ENCODE measurements at regions of chr14 and their contacts with region 1.

Region 1: DNA sequence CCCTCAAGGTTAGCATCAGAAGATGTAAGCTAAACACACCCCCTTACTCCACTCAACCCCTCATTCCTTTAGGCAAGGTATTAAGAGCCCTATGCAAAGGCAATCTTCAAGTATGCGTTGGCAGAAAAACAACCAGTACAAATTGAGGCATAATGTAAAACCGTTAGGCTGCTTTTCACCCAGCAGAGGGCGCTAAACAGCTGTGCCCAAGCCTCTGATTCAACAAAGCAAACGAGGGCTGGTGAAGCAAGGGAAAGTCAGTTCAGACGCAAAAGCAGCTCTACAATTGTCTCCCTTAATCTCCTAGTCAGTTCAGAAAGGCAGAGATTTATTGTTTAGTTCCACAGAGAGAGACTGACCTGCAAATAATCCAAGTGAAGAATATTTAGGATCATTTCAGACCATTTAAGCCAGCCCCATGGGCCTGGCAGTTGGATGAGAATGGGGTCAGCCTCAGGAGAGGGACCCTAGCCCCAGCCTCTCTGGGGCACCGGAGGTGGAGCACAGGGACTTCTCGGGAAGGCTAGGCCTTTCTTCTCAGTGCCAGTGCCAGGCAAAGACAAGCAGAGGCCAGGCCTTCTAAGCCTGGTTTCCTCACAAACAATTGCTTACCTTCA is 23.5 kb downstream of the DCAF5 start:
- DNase-seq: peak; percentile 82
- ATAC-seq: peak; percentile 88
- H3K4me3 Mint-ChIP-seq: no peak overlapping the region
- H3K27ac Mint-ChIP-seq: peak overlapping the region; percentile 62
- H3K4me1 Mint-ChIP-seq: peaks cover 30% of the 10 kb centered on the region
- H3K27me3 Mint-ChIP-seq: no peaks in the 10 kb centered on the region

Region 2: DNA sequence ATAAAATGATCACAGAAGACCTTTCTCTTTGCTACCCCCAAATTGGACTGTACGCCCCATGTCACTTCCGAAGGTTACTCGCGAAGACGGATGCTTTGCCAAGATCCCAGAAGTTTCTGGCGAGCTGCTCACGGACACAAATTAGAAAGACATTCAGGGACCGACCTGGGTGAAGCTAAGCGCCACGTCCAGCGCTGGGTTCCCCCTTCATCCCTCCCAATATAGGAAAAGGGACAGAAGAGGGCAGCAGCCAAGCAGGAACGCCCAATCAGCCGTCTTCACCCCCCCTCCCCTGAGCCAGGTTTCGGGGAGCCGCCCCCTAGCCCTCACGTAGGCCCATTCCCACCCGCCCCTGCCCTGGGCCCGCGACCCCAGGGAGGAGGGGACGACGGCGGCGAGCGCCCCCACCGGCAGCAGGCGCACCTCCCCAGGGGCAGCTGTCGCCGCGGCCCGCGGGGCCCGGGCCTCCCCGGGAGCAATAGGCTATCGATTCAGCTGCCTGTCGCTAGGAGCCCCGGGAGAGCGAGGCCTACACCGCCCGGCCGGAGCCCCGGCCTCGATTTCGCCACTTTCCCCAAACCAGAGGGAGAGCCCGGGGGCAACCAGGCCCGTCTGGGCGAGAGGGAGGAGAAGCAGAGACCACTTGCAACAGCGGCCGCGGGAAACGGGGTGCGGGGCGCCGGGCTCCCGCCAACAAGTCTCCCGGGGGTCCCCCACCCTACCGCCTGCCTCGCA is 22.1 kb after region 1 on chr14:
- CTCF ChIA-PET with region 1: interaction called, 19 read pairs
- DNase-seq: peak; percentile 84
- ATAC-seq: peak; percentile 65
- H3K4me3 Mint-ChIP-seq: peak overlapping the region; percentile 83
- H3K27ac Mint-ChIP-seq: peak overlapping the region; percentile 93
- H3K4me1 Mint-ChIP-seq: peaks cover 37% of the 10 kb centered on the region
- H3K27me3 Mint-ChIP-seq: peaks cover 16% of the 10 kb centered on the region

Measured in activated CD8-positive, alpha-beta memory T cell treated with anti-CD3 and anti-CD28 coated beads, Interleukin-2, amount 10 ng/mL, durations not matched to agents 7 days and 5 days (primary cell).